Natural killer cell (primary cell): ENCODE measurements at regions of chr18 and their contacts with region 1.

Region 1: GRCh38 chr18:57586251-57587049 is at the start of gene FECH:
- DNase-seq: peak; percentile 70 to 79
- ATAC-seq: peak; percentile 95 to 98 (median 97)
- H3K4me3 ChIP-seq: peak within 1 kb of the TSS; percentile 56
- H3K4me3 Mint-ChIP-seq: peak within 1 kb of the TSS; percentile 97
- H3K27ac ChIP-seq: peak within 1 kb of the TSS; percentile 53
- H3K27ac Mint-ChIP-seq: peak within 1 kb of the TSS; percentile 78 to 91
- H3K4me1 ChIP-seq: peaks cover 16% of the 10 kb centered on the region
- H3K4me1 Mint-ChIP-seq: peaks cover 24 to 29% of the 10 kb centered on the region in 2 donors
- H3K27me3 ChIP-seq: no peaks in the 10 kb centered on the region
- H3K27me3 Mint-ChIP-seq: no peaks in the 10 kb centered on the region
- CTCF ChIP-seq: no peak
- total RNA-seq, gene FECH: 13.9 to 22.0 (median 20.6) TPM

Region 2: DNA sequence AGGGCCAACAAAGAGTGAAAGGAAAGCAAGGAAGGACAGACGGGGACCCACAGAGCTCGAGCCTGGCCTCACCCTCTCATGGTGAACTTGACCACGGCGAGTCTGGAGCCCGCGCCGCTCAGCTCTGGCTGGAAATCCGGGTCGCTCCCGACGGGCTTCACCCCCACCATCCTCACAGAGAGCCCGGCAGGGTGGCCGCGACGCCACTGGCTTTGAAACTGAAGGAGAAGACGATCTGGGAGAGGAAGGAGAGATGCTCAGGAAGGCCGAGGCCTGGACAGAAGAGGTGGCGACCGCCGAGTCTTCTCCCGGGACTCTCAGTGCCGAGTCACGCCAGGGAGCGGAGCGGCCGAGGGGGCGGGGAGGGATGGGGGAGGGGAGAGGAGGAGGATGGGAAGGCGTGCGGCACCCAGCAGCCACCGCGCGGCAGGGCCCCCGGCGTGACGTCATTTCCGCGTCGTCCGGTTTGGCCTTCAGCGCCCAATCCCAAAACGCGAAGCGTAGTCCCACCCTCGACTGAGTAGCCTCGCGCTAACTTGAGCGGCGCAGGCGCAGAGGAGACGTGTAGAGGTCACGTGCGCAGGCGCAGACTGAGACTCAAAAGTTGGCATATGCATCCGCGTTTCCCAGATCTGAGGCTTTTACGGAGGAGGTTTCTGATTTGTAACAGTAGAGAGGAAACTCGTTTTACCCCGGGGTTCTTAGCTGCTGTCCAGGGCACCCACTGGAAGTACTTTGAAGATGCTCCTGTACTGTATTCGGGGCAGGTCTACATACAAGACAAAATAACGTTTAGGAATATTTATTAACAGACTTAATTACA is 948.0 kb before region 1 on chr18 and contains the start of gene TXNL1:
- intact Hi-C with region 1: loop called (anchors 10 kb)
- DNase-seq: peak; percentile 98 to 100
- ATAC-seq: peak; percentile 96 to 100 (median 97)
- H3K4me3 ChIP-seq: peak within 1 kb of the TSS; percentile 93
- H3K4me3 Mint-ChIP-seq: peak within 1 kb of the TSS; percentile 100
- H3K27ac ChIP-seq: peak within 1 kb of the TSS; percentile 96
- H3K27ac Mint-ChIP-seq: peak within 1 kb of the TSS; percentile 96 to 99
- H3K4me1 ChIP-seq: peaks cover 9% of the 10 kb centered on the region
- H3K4me1 Mint-ChIP-seq: peaks cover 48% of the 10 kb centered on the region in 2 donors
- H3K27me3 ChIP-seq: no peaks in the 10 kb centered on the region
- H3K27me3 Mint-ChIP-seq: no peaks in the 10 kb centered on the region
- CTCF ChIP-seq: no peak
- total RNA-seq, gene TXNL1: 43.2 to 44.8 (median 44.0) TPM

Region 3: GRCh38 chr18:57455576-57456129 is 130.8 kb before region 1 on chr18:
- intact Hi-C with region 1: no loop called
- DNase-seq: no peak
- ATAC-seq: no peak
- H3K4me3 ChIP-seq: no peak overlapping the region
- H3K4me3 Mint-ChIP-seq: no peak overlapping the region
- H3K27ac ChIP-seq: no peak overlapping the region
- H3K27ac Mint-ChIP-seq: no peak overlapping the region
- H3K4me1 ChIP-seq: no peaks in the 10 kb centered on the region
- H3K4me1 Mint-ChIP-seq: no peaks in the 10 kb centered on the region
- H3K27me3 ChIP-seq: peaks cover 2% of the 10 kb centered on the region
- H3K27me3 Mint-ChIP-seq: peaks cover 11 to 16% of the 10 kb centered on the region in 2 donors
- CTCF ChIP-seq: no peak

Region 4: GRCh38 chr18:57621246-57621604 is 34.8 kb after region 1 on chr18:
- intact Hi-C with region 1: loop called (anchors 2 kb)
- DNase-seq: no peak
- ATAC-seq: peak; percentile 1 to 15 (median 10)
- H3K4me3 ChIP-seq: peak overlapping the region; percentile 92
- H3K4me3 Mint-ChIP-seq: peak overlapping the region; percentile 97
- H3K27ac ChIP-seq: peak overlapping the region; percentile 83
- H3K27ac Mint-ChIP-seq: peak overlapping the region; percentile 97
- H3K4me1 ChIP-seq: peaks cover 9% of the 10 kb centered on the region
- H3K4me1 Mint-ChIP-seq: peaks cover 8 to 20% of the 10 kb centered on the region in 2 donors
- H3K27me3 ChIP-seq: no peaks in the 10 kb centered on the region
- H3K27me3 Mint-ChIP-seq: no peaks in the 10 kb centered on the region
- CTCF ChIP-seq: no peak

Region 5: DNA sequence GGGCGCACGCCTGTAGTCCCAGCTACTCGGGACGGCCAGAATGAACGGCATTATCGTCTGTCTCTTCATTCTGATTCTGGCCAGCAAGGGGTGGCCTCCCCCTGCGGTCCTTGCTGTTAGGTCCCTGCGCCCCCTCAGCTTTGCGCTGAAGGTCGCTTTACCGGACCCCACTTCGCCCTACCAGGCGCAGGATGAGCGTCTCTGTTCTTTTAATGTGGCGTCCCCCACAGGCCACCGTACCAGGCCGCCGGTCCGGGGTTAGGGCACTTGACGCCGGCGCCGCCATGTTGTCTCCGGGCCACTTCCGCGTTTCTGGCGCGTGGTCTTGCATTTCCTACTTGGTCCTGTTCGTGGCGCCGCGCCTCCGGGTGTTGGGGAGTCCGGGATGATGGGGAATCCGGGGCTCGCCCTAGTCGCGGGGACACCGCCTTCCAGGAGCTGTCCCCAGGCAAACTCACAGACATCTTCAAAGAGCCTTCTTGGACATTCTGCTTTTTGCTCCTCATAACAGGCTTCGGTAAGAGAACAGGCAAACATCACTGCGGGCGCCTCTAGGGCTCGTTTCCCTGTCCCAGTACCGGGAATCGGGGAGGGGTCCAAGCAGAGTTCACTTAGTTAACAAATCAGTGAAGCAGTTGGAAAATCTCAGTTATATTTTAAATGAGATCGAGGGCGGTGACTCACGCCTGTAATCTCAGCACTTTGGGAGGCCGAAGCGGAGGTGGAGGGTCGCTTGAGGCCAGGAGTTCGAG is 43.7 kb after region 1 on chr18:
- intact Hi-C with region 1: loop called (anchors 2 kb)
- DNase-seq: peak; percentile 93 to 96
- ATAC-seq: peak; percentile 97 to 100 (median 99)
- H3K4me3 ChIP-seq: peak overlapping the region; percentile 92
- H3K4me3 Mint-ChIP-seq: peak overlapping the region; percentile 97
- H3K27ac ChIP-seq: peak overlapping the region; percentile 67
- H3K27ac Mint-ChIP-seq: peak overlapping the region; percentile 94 to 96
- H3K4me1 ChIP-seq: peaks cover 17% of the 10 kb centered on the region
- H3K4me1 Mint-ChIP-seq: peaks cover 10 to 22% of the 10 kb centered on the region in 2 donors
- H3K27me3 ChIP-seq: no peaks in the 10 kb centered on the region
- H3K27me3 Mint-ChIP-seq: no peaks in the 10 kb centered on the region
- CTCF ChIP-seq: peak; percentile 64